OCI-LY7 (cell line): ENCODE measurements at regions of chr13 and their contacts with region 1.

Region 1: DNA sequence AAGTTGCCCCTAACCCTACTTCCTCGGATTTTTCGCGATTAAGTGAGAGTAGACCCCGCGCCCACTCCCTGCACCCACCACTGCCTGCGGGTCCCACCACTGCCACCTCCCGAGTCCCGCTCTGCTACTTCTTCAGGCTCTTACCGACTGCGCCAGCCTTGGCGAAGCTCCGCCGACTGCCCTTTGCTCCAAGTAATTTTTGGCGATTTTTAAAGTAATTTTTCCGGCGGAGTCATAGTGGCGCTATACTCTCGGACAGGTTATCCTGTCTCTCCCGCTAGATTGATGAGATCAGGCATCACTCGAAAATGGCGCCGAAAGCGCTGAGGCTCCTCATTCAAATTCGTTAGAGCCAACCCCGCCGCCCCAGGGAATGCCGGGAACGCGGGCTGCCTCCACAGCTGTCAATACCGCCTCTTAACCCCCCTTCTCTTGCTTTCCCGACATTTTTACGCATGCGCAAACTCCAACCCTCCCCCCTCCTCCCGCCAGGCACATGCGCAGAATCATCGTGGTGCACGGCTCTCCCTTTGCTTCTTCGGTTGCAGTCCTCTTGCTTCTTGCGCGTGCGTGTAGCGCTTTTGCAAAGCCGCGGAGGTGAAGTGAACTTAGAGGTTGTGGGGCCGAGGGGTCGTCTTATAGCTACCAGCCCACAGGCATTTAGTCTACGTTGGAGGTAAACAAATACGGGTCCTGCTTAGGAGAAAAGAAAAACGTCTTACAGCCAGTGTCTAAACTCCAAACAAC is 66.6 kb downstream of the KCNRG start:
- DNase-seq: peak; percentile 98
- H3K4me3 ChIP-seq: peak overlapping the region; percentile 96
- H3K27ac ChIP-seq: peak overlapping the region; percentile 89
- H3K4me1 ChIP-seq: peaks cover 42% of the 10 kb centered on the region
- CTCF ChIP-seq: peak; percentile 63

Region 2: GRCh38 chr13:49996951-49997895 is 84.6 kb before region 1 on chr13 and contains the start of gene TRIM13:
- CTCF ChIA-PET with region 1: interaction called, 5 read pairs
- POLR2A ChIA-PET with region 1: interaction called, 5 read pairs
- intact Hi-C with region 1: loop called (anchors 2 kb)
- DNase-seq: peak; percentile 92
- H3K4me3 ChIP-seq: peak within 1 kb of the TSS; percentile 94
- H3K27ac ChIP-seq: peak within 1 kb of the TSS; percentile 87
- H3K4me1 ChIP-seq: peaks cover 39% of the 10 kb centered on the region
- CTCF ChIP-seq: peak; percentile 97
- total RNA-seq, gene TRIM13: 9.5 and 12.5 TPM in 2 replicates

Region 3: DNA sequence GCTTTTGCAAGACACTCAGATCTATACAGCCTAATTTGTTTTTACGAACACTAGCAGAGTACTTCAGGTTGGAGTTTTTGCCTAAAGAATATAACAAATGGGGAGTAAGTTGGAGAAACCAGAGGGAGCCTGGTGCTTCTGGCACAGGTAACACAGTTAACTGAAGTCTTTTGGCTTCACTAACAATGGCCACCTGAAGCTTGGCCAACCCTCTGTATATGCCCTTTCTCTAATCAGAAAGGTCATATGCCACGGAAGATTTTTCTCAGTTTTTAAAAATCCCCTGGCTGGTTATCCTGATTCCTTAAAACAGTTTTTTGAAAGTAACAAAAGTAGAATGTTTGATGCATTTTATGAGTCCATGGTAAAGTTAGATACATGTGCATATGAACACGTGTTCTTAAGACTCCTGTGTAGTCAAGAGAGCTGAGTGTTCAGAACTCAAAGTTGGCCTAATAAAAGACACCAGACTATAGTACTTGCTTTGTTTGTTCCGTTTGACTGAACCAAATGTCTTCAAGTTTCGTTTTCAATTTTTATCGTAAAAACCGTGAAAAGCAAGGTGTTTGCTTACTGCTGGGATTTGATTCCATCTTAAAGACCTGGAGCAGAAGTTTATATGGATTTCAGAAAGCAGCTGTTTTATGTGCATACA is 70.9 kb after region 1 on chr13:
- CTCF ChIA-PET with region 1: no interaction called
- POLR2A ChIA-PET with region 1: interaction called, 3 read pairs
- intact Hi-C with region 1: loop called (anchors 2 kb)
- DNase-seq: peak; percentile 81
- H3K4me3 ChIP-seq: peak overlapping the region; percentile 52
- H3K27ac ChIP-seq: peak overlapping the region; percentile 79
- H3K4me1 ChIP-seq: peaks cover 49% of the 10 kb centered on the region
- CTCF ChIP-seq: no peak

Region 4: DNA sequence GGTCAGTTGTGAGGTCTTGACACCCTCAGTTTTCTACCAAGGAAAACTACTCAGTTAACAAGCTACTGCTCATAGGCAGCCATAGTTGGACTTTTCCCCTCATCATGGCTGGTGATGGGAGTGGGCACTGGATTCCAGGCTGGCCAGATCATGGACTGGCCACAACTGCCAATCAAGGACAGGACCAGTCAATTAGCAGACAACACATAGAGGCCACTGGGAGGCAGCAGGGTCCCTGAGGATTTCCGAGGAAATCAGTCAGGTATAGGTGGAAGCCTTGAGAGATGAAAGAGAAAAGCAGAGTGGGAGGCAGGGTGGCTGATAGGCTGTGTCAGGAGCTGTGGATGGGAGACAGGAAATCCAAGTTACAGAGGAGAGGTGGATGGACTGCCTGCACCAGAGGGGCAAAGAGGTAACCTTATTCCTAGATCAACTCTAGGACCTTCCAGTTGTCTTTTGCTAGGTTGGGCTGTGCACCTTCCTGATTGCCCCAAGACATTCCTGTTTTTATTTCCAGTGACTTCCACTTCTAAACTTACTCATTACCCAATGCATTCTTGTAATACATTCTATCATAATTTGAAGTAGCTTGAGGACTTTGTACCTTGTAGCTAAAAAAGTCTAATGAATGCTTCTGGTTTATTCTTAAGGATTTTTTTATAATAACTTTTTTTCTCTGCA is 295.2 kb after region 1 on chr13:
- CTCF ChIA-PET with region 1: no interaction called
- POLR2A ChIA-PET with region 1: no interaction called
- intact Hi-C with region 1: loop called (anchors 5 kb)
- DNase-seq: no peak
- H3K4me3 ChIP-seq: no peak overlapping the region
- H3K27ac ChIP-seq: no peak overlapping the region
- H3K4me1 ChIP-seq: peaks cover 42% of the 10 kb centered on the region
- CTCF ChIP-seq: peak; percentile 42; the same call in 1 of the 2 replicates

Region 5: GRCh38 chr13:50512474-50513299 is 430.8 kb after region 1 on chr13:
- CTCF ChIA-PET with region 1: interaction called, 4 read pairs
- POLR2A ChIA-PET with region 1: interaction called, 8 read pairs
- intact Hi-C with region 1: loop called (anchors 1 kb)
- DNase-seq: peak; percentile 95
- H3K4me3 ChIP-seq: peak overlapping the region; percentile 65
- H3K27ac ChIP-seq: peak overlapping the region; percentile 98
- H3K4me1 ChIP-seq: peaks cover 78% of the 10 kb centered on the region
- CTCF ChIP-seq: peak; percentile 68

Region 6: GRCh38 chr13:50783717-50784290 is 702.0 kb after region 1 on chr13:
- CTCF ChIA-PET with region 1: no interaction called
- POLR2A ChIA-PET with region 1: no interaction called
- intact Hi-C with region 1: no loop called
- DNase-seq: no peak
- H3K4me3 ChIP-seq: no peak overlapping the region
- H3K27ac ChIP-seq: no peak overlapping the region
- H3K4me1 ChIP-seq: no peaks in the 10 kb centered on the region
- CTCF ChIP-seq: no peak

Region 7: DNA sequence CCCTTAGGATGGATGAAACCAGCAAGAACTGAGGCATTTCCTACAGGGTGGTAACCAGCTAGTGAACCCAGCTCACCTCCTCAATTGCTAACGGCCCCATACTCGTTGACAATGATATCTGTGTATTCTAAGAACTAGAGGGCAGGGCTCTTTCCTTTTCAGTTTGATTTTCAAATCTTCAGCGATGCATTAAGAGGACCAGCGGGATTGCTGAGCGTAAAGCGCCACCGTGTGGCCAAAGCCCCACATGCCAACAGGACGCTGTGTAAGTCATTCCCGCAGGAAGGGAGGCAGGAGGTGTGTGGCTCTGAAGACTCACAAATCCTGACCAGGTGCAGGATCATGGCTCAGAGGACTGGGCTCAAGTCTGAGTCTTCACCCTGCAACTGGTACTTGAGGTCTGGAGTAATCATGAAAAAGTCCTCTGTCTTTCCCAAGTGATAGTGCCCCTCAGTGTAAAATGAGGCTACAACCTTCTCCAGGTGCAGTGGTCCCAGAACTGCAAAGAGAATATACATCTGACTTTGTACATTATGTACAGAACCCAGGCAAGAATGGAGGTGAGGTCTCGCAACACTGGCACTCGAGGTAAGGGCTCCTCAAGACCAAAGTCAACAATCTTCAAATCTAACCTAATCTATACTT is 988.3 kb after region 1 on chr13:
- CTCF ChIA-PET with region 1: no interaction called
- POLR2A ChIA-PET with region 1: no interaction called
- intact Hi-C with region 1: loop called (anchors 2 kb)
- DNase-seq: peak; percentile 88
- H3K4me3 ChIP-seq: no peak overlapping the region
- H3K27ac ChIP-seq: no peak overlapping the region
- H3K4me1 ChIP-seq: peaks cover 5% of the 10 kb centered on the region
- CTCF ChIP-seq: peak; percentile 98